ENCODE measurements at regions of chr11 and their contacts with region 1.

Region 1: DNA sequence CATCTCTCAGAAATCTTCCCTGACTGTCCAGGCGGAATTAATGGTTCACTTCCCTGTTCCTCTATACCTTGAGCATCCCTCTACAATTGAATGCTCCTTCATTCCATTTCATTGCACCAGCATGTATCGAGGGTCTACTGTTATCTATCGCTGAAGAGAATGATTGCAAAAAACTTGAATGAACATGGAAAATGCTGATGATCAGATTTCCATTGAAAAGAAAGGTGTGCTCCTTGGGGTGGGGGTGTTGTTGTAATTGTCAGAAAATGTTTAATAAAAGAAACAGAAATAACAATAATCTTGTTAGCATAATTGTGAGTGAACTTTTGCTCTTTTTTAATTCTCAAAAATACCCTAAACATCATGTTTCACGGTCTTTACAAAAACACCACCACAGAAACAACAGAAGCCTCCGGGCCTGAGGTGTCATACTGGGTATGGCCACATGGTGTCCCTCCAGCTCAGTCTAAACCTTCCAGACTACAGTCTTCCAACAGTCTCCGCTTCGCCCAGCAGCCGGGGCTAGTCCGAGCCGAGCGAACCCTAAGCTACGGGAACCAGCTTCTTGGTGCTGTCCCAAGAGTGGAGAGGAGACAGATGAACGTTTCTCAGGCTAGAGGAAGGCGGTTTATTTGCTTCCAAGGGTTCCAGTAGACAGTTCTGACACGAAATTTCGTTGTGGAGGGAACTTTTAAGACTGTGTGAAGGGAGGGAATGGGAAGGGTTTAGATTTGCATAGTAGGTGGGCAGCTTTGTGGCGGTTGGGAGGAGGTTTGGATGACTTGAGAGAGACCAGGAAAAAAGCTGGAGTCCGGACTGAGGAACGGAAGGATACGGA is 75.8 kb upstream of the ZBED5 start:
- DNase-seq: peak; percentile 88 to 93 (median 91)
- H3K4me3 ChIP-seq: peak overlapping the region; percentile 40
- H3K27ac ChIP-seq: peak overlapping the region; percentile 13 to 82
- H3K4me1 ChIP-seq: peaks cover 6% of the 10 kb centered on the region
- H3K27me3 ChIP-seq: no peaks in the 10 kb centered on the region
- CTCF ChIP-seq: peak; percentile 82 to 97 (median 96)
- EP300 ChIP-seq: no peak
- POLR2A ChIP-seq: peak; percentile 18

Region 2: GRCh38 chr11:10792398-10792975 is 141.2 kb before region 1 on chr11:
- intact Hi-C with region 1: loop called in 1 of 4 experiments (anchors 10 kb)
- DNase-seq: peak; percentile 75 to 90 (median 84)
- H3K4me3 ChIP-seq: no peak overlapping the region
- H3K27ac ChIP-seq: no peak overlapping the region
- H3K4me1 ChIP-seq: no peaks in the 10 kb centered on the region
- H3K27me3 ChIP-seq: no peaks in the 10 kb centered on the region
- CTCF ChIP-seq: peak; percentile 79 to 83 (median 82)
- EP300 ChIP-seq: no peak
- POLR2A ChIP-seq: no peak

Region 3: GRCh38 chr11:10808553-10809372 is 124.9 kb before region 1 on chr11 and contains the start of gene EIF4G2:
- intact Hi-C with region 1: loop called in 2 of 4 experiments (anchors 2 to 5 kb)
- DNase-seq: peak; percentile 98
- H3K4me3 ChIP-seq: peak within 1 kb of the TSS; percentile 99
- H3K27ac ChIP-seq: peak within 1 kb of the TSS; percentile 94 to 96
- H3K4me1 ChIP-seq: peaks cover 5% of the 10 kb centered on the region
- H3K27me3 ChIP-seq: no peaks in the 10 kb centered on the region
- CTCF ChIP-seq: peak in 1 of 3 donors; percentile 11
- EP300 ChIP-seq: no peak
- POLR2A ChIP-seq: peak; percentile 98
- total RNA-seq, gene EIF4G2: 206 to 761 (median 582) TPM

Region 4: DNA sequence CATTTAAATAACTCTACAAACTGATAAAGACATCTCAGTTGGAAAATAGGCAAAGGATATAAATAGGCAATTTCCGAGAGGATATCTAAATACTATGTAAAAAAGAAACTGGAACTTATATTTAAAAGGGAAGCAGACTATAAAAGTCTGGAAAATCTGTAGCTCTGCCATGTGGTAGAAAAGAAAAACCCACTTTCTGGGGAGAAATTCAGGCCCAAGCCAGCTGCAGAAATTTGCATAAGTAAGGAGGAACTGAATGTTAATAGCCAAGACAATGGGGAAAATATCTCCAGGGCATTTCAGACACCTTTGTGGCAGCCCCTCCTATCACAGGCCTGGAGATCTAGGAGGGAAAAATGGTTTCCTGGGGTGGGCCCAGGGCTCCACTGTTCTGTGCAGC is 21.9 kb after region 1 on chr11:
- intact Hi-C with region 1: no loop called
- DNase-seq: no peak
- H3K4me3 ChIP-seq: no peak overlapping the region
- H3K27ac ChIP-seq: no peak overlapping the region
- H3K4me1 ChIP-seq: no peaks in the 10 kb centered on the region
- H3K27me3 ChIP-seq: no peaks in the 10 kb centered on the region
- CTCF ChIP-seq: no peak
- EP300 ChIP-seq: no peak
- POLR2A ChIP-seq: no peak

Region 5: GRCh38 chr11:11010624-11011127 is 77.0 kb after region 1 on chr11:
- intact Hi-C with region 1: loop called in 1 of 4 experiments (anchors 10 kb)
- DNase-seq: no peak
- H3K4me3 ChIP-seq: no peak overlapping the region
- H3K27ac ChIP-seq: no peak overlapping the region
- H3K4me1 ChIP-seq: no peaks in the 10 kb centered on the region
- H3K27me3 ChIP-seq: no peaks in the 10 kb centered on the region
- CTCF ChIP-seq: no peak
- EP300 ChIP-seq: no peak
- POLR2A ChIP-seq: no peak

Region 6: GRCh38 chr11:11022125-11022730 is 88.6 kb after region 1 on chr11:
- intact Hi-C with region 1: loop called (anchors 2 to 10 kb)
- DNase-seq: no peak
- H3K4me3 ChIP-seq: no peak overlapping the region
- H3K27ac ChIP-seq: no peak overlapping the region
- H3K4me1 ChIP-seq: no peaks in the 10 kb centered on the region
- H3K27me3 ChIP-seq: no peaks in the 10 kb centered on the region
- CTCF ChIP-seq: peak in 2 of 3 donors; percentile 23 to 62
- EP300 ChIP-seq: no peak
- POLR2A ChIP-seq: no peak

Region 7: GRCh38 chr11:11787305-11788062 is 853.8 kb after region 1 on chr11:
- intact Hi-C with region 1: loop called in 3 of 4 experiments (anchors 5 to 10 kb)
- DNase-seq: peak; percentile 73 to 83 (median 82)
- H3K4me3 ChIP-seq: no peak overlapping the region
- H3K27ac ChIP-seq: no peak overlapping the region
- H3K4me1 ChIP-seq: no peaks in the 10 kb centered on the region
- H3K27me3 ChIP-seq: no peaks in the 10 kb centered on the region
- CTCF ChIP-seq: peak; percentile 52 to 91 (median 79)
- EP300 ChIP-seq: no peak
- POLR2A ChIP-seq: no peak